CD14-positive monocyte (primary cell): ENCODE measurements at regions of chr15 and their contacts with region 1.

Region 1: GRCh38 chr15:84783496-84784251 is 33.5 kb upstream of the ALPK3 start:
- DNase-seq: no peak
- H3K4me3 ChIP-seq: no peak overlapping the region
- H3K4me3 Mint-ChIP-seq: no peak overlapping the region
- H3K27ac ChIP-seq: peak overlapping the region in 1 of 2 donors; percentile 44
- H3K27ac Mint-ChIP-seq: peak overlapping the region in 3 of 7 donors; percentile 9 to 70 (median 60)
- H3K4me1 ChIP-seq: peaks cover 9 to 26% of the 10 kb centered on the region in 2 donors
- H3K4me1 Mint-ChIP-seq: peaks cover 33% of the 10 kb centered on the region
- H3K27me3 ChIP-seq: no peaks in the 10 kb centered on the region
- H3K27me3 Mint-ChIP-seq: peaks cover 0 to 2% (median 0%) of the 10 kb centered on the region in 3 donors
- CTCF ChIP-seq: no peak

Region 2: DNA sequence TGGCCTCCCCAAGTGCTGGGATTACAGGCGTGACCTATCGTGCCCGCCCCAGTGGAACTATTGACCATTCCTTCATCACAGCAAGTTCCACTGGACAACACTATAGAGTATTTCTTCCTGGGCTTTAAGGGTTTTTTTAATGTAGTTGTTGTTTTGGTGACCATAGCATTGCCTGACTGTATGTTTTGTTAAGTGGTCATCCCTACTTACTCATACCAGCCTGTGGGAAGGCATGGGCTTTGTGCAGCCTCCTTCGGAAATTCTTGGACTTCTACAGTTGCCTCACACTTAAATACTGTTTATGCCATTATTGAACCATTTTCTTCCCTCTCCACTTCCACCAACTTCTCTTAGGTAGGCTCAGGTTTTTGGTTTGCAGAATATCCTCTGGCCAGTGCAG is 13.5 kb after region 1 on chr15:
- intact Hi-C with region 1: no loop called
- DNase-seq: no peak
- H3K4me3 ChIP-seq: no peak overlapping the region
- H3K4me3 Mint-ChIP-seq: no peak overlapping the region
- H3K27ac ChIP-seq: peak overlapping the region in 1 of 2 donors; percentile 1
- H3K27ac Mint-ChIP-seq: peak overlapping the region in 1 of 7 donors; percentile 11
- H3K4me1 ChIP-seq: no peaks in the 10 kb centered on the region
- H3K4me1 Mint-ChIP-seq: no peaks in the 10 kb centered on the region
- H3K27me3 ChIP-seq: no peaks in the 10 kb centered on the region
- H3K27me3 Mint-ChIP-seq: peaks cover 0 to 2% (median 0%) of the 10 kb centered on the region in 3 donors
- CTCF ChIP-seq: no peak

Region 3: DNA sequence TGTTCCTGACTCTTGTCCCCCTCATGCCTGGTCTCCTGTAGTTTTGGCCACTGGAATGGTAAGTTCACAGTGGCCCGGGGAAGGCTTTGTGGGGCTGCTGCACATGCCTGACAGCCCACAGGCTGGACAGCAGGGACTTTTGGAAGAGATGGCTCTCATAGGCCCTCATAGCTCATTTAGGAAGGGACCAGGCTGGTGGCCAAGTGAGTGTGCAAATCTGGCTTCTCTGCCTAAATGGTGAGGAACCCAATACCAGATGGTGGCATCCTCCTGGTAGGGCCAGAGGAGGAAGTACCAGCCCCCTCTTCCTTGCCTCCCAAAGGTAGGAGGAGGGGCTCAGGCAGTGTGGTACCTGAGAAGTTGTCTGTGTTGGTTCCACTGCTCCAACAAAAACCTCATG is 59.1 kb after region 1 on chr15:
- intact Hi-C with region 1: loop called in 1 of 2 experiments (anchors 2 kb)
- DNase-seq: no peak
- H3K4me3 ChIP-seq: no peak overlapping the region
- H3K4me3 Mint-ChIP-seq: no peak overlapping the region
- H3K27ac ChIP-seq: no peak overlapping the region
- H3K27ac Mint-ChIP-seq: no peak overlapping the region
- H3K4me1 ChIP-seq: no peaks in the 10 kb centered on the region
- H3K4me1 Mint-ChIP-seq: no peaks in the 10 kb centered on the region
- H3K27me3 ChIP-seq: no peaks in the 10 kb centered on the region
- H3K27me3 Mint-ChIP-seq: peaks cover 2 to 3% (median 3%) of the 10 kb centered on the region in 3 donors
- CTCF ChIP-seq: no peak